Panc1 (cell line): ENCODE measurements at regions of chr4 and their contacts with region 1.

Region 1: DNA sequence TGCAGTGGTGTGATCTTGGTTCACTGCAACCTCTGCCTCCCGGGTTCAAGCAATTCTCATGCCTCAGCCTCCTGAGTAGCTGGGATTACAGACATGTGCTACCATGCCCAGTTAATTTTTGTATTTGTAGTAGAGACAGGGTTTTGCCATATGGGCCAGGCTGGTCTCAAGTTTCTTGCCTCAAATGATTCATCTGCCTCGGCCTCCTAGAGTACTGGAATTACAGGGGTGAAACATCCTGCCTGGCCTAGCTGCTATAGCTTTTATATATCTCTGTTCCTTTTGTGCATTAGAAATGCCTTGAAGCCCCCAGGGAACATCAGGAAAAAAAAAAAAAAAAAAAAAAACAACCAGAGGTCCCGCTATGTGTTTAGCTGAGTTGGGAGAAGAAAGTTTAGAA is 34.8 kb downstream of the UBE2K start:
- DNase-seq: no peak
- ATAC-seq: no peak
- H3K4me3 ChIP-seq: no peak overlapping the region
- H3K27ac ChIP-seq: no peak overlapping the region
- H3K4me1 ChIP-seq: peaks cover 1% of the 10 kb centered on the region; the same call in 1 of the 2 replicates
- H3K27me3 ChIP-seq: no peaks in the 10 kb centered on the region
- CTCF ChIP-seq: no peak

Region 2: DNA sequence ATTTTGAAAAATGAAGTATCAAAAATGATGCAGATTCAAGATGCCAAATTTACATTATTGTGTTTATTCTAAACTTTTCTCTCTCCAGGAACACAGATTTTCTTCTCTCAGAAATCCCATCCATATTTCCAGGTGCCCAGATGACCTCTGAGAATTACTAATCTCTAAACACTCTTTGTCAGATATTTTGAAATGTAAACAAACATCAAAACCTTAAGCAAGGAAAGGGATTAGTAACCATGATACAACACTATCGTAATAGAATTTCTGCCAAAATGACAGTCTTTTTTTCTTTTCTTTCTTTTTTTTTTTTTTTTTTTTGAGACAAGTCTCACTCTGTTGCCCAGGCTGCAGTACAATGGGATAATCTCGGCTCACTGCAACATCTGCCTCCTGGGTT is 168.2 kb after region 1 on chr4:
- CTCF ChIA-PET with region 1: no interaction called
- POLR2A ChIA-PET with region 1: interaction called, 10 read pairs
- in situ Hi-C with region 1: no loop called
- intact Hi-C with region 1: no loop called
- DNase-seq: no peak
- ATAC-seq: no peak
- H3K4me3 ChIP-seq: no peak overlapping the region
- H3K27ac ChIP-seq: no peak overlapping the region
- H3K4me1 ChIP-seq: no peaks in the 10 kb centered on the region
- H3K27me3 ChIP-seq: no peaks in the 10 kb centered on the region
- CTCF ChIP-seq: no peak

Region 3: DNA sequence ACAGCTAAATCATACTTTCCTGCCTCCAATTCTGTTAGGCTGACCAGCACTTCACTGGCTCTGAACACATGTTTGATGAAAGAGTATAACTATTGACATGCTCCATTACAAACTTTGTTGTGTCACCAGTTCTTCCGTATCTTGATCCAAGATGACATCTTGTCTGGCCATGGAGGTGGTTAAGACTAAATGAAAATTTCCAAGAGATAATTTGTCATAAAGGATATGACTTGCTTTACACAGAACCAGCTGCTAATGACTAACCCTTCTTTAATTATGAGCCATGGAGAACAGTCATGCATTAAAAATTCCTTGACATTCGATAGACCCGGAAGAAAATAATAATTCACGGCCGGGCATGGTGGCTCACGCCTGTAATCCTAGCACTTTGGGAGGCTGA is 306.2 kb after region 1 on chr4:
- CTCF ChIA-PET with region 1: interaction called, 10 read pairs
- POLR2A ChIA-PET with region 1: no interaction called
- in situ Hi-C with region 1: no loop called
- intact Hi-C with region 1: no loop called
- DNase-seq: no peak
- ATAC-seq: peak; percentile 34; the same call in 1 of the 2 replicates
- H3K4me3 ChIP-seq: no peak overlapping the region
- H3K27ac ChIP-seq: no peak overlapping the region
- H3K4me1 ChIP-seq: no peaks in the 10 kb centered on the region
- H3K27me3 ChIP-seq: no peaks in the 10 kb centered on the region
- CTCF ChIP-seq: no peak